ENCODE measurements at regions of chr5 and their contacts with region 1.

Region 1: GRCh38 chr5:16901038-16901644 is 34.9 kb downstream of the MYO10 start:
- DNase-seq: no peak
- ATAC-seq: no peak
- H3K4me3 ChIP-seq: no peak overlapping the region
- H3K27ac ChIP-seq: peak overlapping the region; percentile 98
- H3K4me1 ChIP-seq: peaks cover 88% of the 10 kb centered on the region
- H3K27me3 ChIP-seq: no peaks in the 10 kb centered on the region
- CTCF ChIP-seq: no peak

Region 2: GRCh38 chr5:16742938-16743337 is 158.2 kb before region 1 on chr5:
- CTCF ChIA-PET with region 1: no interaction called
- POLR2A ChIA-PET with region 1: no interaction called
- in situ Hi-C with region 1: no loop called
- intact Hi-C with region 1: no loop called
- DNase-seq: no peak
- ATAC-seq: no peak
- H3K4me3 ChIP-seq: no peak overlapping the region
- H3K27ac ChIP-seq: no peak overlapping the region
- H3K4me1 ChIP-seq: no peaks in the 10 kb centered on the region
- H3K27me3 ChIP-seq: no peaks in the 10 kb centered on the region
- CTCF ChIP-seq: no peak

Region 3: GRCh38 chr5:16791036-16791705 is 110.0 kb before region 1 on chr5:
- CTCF ChIA-PET with region 1: no interaction called
- POLR2A ChIA-PET with region 1: no interaction called
- in situ Hi-C with region 1: no loop called
- intact Hi-C with region 1: no loop called
- DNase-seq: peak; percentile 62
- ATAC-seq: peak; percentile 73
- H3K4me3 ChIP-seq: no peak overlapping the region
- H3K27ac ChIP-seq: peak overlapping the region; percentile 20
- H3K4me1 ChIP-seq: peaks cover 13% of the 10 kb centered on the region
- H3K27me3 ChIP-seq: no peaks in the 10 kb centered on the region
- CTCF ChIP-seq: peak; percentile 67; the same call in 1 of the 2 replicates

Region 4: DNA sequence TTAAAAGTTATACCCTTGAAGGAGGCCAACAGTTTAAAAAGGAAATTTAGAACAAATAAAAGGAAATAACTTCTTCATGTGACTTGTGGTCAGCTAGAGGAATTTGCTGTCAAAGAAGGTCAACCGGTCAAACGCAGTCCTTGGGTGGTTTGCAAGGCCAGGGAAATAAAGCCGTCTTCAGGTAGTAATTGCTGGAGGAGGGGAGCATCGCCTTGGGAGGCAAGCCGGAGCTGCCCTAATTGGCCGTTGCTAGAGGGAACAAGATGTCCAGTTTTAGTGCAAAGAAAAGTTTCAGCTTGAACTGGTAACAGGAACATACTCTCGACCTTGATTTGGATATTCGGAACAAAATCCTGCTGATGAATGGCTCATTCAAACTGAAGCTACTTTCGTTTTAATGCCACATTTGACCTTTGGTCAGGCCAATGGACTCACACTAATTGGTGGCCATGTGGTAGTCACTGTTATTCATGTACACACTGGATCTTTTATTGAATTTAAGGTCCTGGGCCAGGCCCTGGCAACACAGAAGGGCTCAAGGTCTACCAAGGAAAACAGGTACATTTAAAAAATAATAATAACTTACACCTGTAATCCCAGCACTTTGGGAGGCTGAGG is 82.0 kb after region 1 on chr5:
- CTCF ChIA-PET with region 1: no interaction called
- POLR2A ChIA-PET with region 1: no interaction called
- in situ Hi-C with region 1: no loop called
- intact Hi-C with region 1: no loop called
- DNase-seq: no peak
- ATAC-seq: no peak
- H3K4me3 ChIP-seq: no peak overlapping the region
- H3K27ac ChIP-seq: no peak overlapping the region
- H3K4me1 ChIP-seq: no peaks in the 10 kb centered on the region
- H3K27me3 ChIP-seq: no peaks in the 10 kb centered on the region
- CTCF ChIP-seq: no peak

Region 5: GRCh38 chr5:17056056-17056690 is 155.0 kb after region 1 on chr5:
- CTCF ChIA-PET with region 1: no interaction called
- POLR2A ChIA-PET with region 1: interaction called, 17 read pairs
- in situ Hi-C with region 1: no loop called
- intact Hi-C with region 1: no loop called
- DNase-seq: no peak
- ATAC-seq: peak; percentile 74
- H3K4me3 ChIP-seq: no peak overlapping the region
- H3K27ac ChIP-seq: 0 out of 2 replicates have a peak overlapping the region, but pooled peaks have one; percentile 25
- H3K4me1 ChIP-seq: peaks cover 9% of the 10 kb centered on the region; the same call in 1 of the 2 replicates
- H3K27me3 ChIP-seq: no peaks in the 10 kb centered on the region
- CTCF ChIP-seq: no peak